Heart right ventricle (tissue), 16 donors: ENCODE measurements at regions of chr3 and their contacts with region 1.

Region 1: DNA sequence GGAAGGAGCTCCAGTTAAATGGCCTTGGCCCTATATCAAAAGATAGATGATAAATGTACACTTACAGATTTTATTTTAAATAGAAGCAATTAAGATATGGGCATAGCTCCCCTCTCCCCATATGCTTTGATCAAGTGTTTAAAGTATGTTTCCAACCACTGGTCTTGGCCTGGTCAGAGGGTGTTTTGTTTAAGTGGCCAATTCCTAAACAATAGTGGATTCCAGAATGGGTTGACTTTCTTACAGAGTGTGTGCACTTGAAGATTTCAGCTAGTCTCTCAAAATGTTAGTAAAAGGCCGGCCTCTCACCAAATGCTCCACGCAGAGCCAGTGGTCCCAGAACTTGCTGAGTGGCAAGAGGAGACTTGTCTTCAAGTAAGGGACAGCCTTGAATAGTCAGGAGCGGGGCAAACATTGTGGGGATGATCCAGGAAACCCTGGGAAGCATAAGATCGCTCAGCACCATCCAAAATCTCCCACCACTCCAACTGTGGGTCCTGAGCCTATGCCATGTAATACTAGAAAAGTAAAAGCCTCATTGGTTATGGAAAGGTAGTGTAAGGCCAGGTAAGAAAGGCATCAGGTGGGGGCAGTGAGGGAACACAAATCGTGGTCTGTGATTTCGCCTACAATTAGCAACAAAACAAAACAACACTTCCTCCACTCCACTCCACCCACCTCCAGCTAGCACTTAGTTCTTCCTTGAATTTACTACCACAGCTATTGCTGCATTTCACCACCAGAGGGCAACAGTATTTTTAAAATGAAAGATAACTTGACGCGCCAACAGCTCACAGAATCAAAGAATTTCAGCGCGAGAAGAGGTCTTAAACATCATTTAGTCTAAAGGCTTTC is 4.8 kb downstream of the RARRES1 start:
- DNase-seq: peak in 1 of 2 donors; percentile 72
- ATAC-seq: peak in 4 of 8 donors; percentile 22 to 49 (median 32)
- H3K4me3 ChIP-seq: peak overlapping the region in 1 of 10 donors; percentile 21
- H3K27ac ChIP-seq: peak overlapping the region in 5 of 10 donors; percentile 7 to 81 (median 30)
- H3K4me1 ChIP-seq: peaks cover 6 to 57% (median 32%) of the 10 kb centered on the region in 9 donors
- H3K27me3 ChIP-seq: no peaks in the 10 kb centered on the region
- CTCF ChIP-seq: peak; percentile 54 to 85 (median 80)

Region 2: GRCh38 chr3:158659454-158660237 is 67.8 kb before region 1 on chr3:
- intact Hi-C with region 1: loop called in 1 of 10 experiments (anchors 10 kb)
- DNase-seq: peak in 1 of 2 donors; percentile 58
- ATAC-seq: peak in 7 of 8 donors; percentile 74 to 93 (median 85)
- H3K4me3 ChIP-seq: no peak overlapping the region
- H3K27ac ChIP-seq: peak overlapping the region in 9 of 10 donors; percentile 18 to 74 (median 46)
- H3K4me1 ChIP-seq: peaks cover 0 to 19% (median 9%) of the 10 kb centered on the region in 9 donors
- H3K27me3 ChIP-seq: no peaks in the 10 kb centered on the region
- CTCF ChIP-seq: peak; percentile 61 to 79 (median 70)

Region 3: DNA sequence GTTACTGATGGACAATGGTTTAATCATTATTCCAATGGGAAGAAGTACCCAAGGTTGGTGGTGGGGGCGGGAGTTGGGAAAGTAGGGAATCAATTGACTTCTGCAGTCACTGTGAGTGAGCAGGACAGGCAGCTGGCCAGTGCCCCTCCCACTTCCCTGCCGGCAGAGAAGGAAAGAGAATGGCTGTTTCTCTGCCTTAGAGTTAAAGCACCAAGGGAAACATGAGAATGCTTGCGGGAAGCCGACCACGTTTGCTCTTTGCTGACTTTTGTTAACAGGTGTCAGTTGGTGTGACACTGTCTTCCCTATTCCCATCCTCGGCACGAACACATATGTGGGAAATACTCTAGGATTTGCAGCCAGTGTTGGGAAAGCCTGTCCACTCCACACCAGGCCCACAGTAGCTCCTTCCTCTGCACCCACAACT is 40.9 kb after region 1 on chr3:
- intact Hi-C with region 1: loop called in 2 of 10 experiments (anchors 5 kb)
- DNase-seq: peak; percentile 61 to 70
- ATAC-seq: peak; percentile 71 to 93 (median 80)
- H3K4me3 ChIP-seq: peak overlapping the region in 3 of 10 donors; percentile 8 to 16 (median 14)
- H3K27ac ChIP-seq: peak overlapping the region in 9 of 10 donors; percentile 26 to 76 (median 63)
- H3K4me1 ChIP-seq: peaks cover 5 to 72% (median 37%) of the 10 kb centered on the region in 9 donors
- H3K27me3 ChIP-seq: no peaks in the 10 kb centered on the region
- CTCF ChIP-seq: no peak

Region 4: DNA sequence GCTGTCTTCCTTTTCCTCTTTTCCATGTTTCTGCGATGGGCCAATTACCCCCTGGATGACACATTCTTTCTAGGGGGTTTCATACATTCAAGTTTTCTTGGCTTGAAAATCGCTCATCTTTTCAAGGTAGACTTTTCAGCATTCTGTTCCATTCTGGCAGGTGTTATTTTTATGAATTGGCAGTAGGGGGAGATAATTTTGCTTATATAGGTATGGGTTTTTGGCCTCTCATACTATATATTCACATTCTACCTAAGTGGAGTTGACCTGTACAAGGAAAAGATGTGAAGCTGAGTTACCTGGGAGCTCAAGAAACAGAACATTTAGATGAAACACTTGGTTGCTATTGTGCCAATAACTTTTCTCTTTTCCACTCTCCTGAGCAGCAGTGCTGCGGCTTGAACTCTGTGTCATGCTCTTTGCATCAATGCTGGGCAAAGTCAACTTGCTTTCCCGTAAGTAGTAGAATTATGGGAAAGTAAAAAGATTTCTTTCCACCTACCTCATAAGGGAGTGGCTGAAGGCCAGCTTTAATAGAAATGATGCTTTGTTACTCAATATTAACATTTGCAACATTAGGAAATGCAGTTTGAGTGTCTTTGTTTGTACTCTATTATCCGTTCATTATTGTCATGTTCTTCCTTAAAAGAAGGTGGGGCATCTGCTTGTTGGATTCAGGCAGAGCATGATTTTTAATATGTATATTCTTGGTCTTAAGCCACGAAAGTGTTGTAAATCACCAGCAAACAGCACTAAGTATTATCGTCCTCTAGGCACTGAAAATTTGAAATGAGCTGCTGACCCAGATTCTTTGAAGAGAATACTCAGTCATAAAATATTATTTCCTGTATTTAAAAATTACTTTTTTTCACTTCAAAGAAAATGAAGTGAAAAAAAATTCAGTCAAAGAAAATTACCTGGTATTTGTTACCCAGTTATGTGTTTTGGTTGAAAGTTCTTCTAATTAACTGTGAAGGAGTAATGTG is 46.7 kb after region 1 on chr3:
- intact Hi-C with region 1: loop called in 2 of 10 experiments (anchors 5 kb)
- DNase-seq: no peak
- ATAC-seq: peak in 2 of 8 donors; percentile 22 to 73
- H3K4me3 ChIP-seq: no peak overlapping the region
- H3K27ac ChIP-seq: peak overlapping the region in 5 of 10 donors; percentile 2 to 73 (median 12)
- H3K4me1 ChIP-seq: peaks cover 0 to 48% (median 25%) of the 10 kb centered on the region in 9 donors
- H3K27me3 ChIP-seq: no peaks in the 10 kb centered on the region
- CTCF ChIP-seq: no peak